Activated naive CD4-positive, alpha-beta T cell treated with anti-CD3 and anti-CD28 coated beads, Interleukin-2, amount 10 ng/mL, durations not matched to agents 7 days and 5 days (primary cell): ENCODE measurements at regions of chr1 and their contacts with region 1.

Region 1: DNA sequence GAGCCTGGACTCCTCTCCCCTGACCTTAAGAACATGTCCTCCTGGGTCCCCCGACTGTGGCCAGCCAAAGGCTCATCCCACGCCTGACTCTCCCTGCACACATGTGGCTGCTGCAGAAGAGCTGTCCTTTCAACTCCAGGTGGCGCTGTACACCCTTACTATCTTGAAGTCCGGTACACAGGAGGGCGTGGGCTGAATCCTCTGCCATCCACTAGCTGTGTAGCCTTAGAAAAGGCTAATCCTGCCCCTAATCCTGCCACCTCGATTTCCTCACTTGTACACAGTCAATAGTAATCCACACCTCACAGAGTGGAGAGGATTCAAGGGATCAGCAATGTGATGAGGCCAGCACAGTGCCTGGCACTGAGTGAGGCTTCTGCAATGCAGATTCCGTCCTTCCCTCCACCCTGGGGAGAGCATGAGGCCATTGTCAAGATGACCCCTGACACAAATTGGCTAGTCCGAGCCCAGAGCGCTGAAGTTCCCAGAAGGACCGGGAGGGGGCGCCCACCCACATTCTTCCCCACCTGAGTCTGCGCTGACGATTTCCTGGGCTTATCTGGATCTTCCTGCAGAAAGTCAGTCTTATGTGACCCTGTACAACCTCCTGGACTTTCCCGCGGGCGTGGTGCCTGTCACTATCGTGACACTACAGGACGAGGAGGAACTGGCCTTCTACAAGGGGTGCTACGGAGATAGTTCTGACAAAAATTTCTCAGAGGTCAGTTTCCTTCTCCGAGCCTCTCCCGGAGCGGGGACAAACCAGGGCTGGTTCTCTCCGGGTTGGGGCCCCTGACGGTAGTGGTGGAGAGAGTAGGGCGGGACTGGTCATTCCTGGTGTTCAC is 47.1 kb upstream of the DMBX1 start:
- DNase-seq: peak; percentile 76
- H3K4me3 Mint-ChIP-seq: peak overlapping the region; percentile 76
- H3K27ac Mint-ChIP-seq: no peak overlapping the region
- H3K4me1 Mint-ChIP-seq: peaks cover 9% of the 10 kb centered on the region
- H3K27me3 Mint-ChIP-seq: peaks cover 76% of the 10 kb centered on the region

Region 2: DNA sequence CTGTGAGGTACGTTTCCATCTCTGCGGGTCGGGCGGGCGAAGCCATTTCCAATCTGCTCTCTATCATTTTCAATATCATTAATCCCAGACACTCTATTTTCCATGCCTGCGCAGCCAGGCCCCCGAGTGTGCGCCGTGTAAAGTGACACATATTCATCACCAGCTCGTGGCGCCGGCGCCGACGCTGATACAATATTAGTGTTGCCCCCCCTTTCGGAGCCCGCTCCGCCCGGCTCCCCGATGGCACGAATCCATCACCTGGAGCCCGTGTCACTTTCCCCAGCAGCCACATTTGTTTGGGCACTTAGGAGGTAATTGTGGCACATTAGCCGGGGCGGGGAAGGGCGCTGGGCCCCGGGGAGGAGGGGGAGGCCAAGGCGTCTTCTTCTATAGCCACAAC is 13.4 kb after region 1 on chr1:
- CTCF ChIA-PET with region 1: interaction called, 11 read pairs
- DNase-seq: no peak
- H3K4me3 Mint-ChIP-seq: no peak overlapping the region
- H3K27ac Mint-ChIP-seq: no peak overlapping the region
- H3K4me1 Mint-ChIP-seq: no peaks in the 10 kb centered on the region
- H3K27me3 Mint-ChIP-seq: peaks cover 80% of the 10 kb centered on the region